Lower leg skin (tissue), 4 donors: ENCODE measurements at regions of chr1 and their contacts with region 1.

Region 1: GRCh38 chr1:36557041-36558000 is 74.6 kb upstream of the CSF3R start:
- DNase-seq: peak in 1 of 2 donors; percentile 45
- H3K4me3 ChIP-seq: no peak overlapping the region
- CTCF ChIP-seq: no peak
- POLR2A ChIP-seq: no peak

Region 2: DNA sequence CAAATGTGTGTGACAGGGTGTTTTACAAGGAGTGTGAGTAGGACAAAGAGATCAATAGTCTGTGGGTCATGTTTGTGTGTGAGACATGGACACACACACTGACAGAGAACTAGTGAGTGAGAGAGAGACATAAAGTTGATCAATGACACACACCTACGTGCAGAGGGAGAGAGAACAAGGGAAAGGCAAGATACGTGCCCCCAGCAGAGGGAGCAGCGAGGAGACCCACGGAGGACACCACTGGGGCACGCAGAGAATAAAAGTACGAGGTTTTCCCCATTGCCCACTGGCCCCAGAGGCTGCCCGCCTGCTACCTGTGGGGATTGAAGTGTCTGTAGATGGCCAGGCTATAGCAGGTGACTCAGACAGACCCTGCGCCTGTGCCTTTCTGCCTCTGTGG is 55.6 kb after region 1 on chr1:
- intact Hi-C with region 1: no loop called
- DNase-seq: no peak
- H3K4me3 ChIP-seq: no peak overlapping the region
- CTCF ChIP-seq: no peak
- POLR2A ChIP-seq: no peak

Region 3: GRCh38 chr1:36864182-36864822 is 307.0 kb after region 1 on chr1:
- intact Hi-C with region 1: no loop called
- DNase-seq: no peak
- H3K4me3 ChIP-seq: no peak overlapping the region
- CTCF ChIP-seq: no peak
- POLR2A ChIP-seq: no peak

Region 4: DNA sequence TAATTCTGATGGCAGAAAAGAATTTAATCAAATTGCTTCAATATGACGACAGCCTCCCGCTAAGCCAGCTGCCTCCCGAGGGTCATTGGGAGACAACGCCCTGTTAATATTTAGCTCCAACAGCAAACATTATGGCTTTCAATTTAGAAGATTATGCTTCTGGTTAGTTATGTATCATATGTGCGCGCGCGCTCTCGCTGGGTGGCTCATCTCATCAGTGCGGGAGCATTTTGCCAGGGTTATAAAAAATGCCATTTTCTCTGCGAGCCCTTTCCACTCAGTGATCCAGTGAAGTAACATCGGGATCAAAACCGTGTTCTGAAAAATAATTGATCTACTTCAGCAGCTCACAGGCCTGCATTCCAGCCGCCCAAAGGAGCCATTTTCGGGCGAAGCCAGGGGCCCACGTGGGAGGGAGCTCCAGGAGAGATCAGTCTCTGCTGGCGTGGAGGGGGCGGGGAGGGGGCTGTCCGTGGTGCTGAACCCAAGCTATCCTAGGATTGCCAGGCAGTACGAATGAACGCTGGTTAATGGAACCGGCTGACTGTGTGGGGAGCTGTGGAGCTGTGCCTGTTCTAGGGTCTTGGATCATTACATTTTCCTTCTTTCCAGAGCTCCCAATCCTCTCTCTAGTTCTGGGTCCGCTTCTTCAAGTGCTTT is 697.9 kb after region 1 on chr1:
- intact Hi-C with region 1: loop called (anchors 5 kb)
- DNase-seq: no peak
- H3K4me3 ChIP-seq: no peak overlapping the region
- CTCF ChIP-seq: no peak
- POLR2A ChIP-seq: no peak